ENCODE measurements at regions of chr18 and their contacts with region 1.

Region 1: DNA sequence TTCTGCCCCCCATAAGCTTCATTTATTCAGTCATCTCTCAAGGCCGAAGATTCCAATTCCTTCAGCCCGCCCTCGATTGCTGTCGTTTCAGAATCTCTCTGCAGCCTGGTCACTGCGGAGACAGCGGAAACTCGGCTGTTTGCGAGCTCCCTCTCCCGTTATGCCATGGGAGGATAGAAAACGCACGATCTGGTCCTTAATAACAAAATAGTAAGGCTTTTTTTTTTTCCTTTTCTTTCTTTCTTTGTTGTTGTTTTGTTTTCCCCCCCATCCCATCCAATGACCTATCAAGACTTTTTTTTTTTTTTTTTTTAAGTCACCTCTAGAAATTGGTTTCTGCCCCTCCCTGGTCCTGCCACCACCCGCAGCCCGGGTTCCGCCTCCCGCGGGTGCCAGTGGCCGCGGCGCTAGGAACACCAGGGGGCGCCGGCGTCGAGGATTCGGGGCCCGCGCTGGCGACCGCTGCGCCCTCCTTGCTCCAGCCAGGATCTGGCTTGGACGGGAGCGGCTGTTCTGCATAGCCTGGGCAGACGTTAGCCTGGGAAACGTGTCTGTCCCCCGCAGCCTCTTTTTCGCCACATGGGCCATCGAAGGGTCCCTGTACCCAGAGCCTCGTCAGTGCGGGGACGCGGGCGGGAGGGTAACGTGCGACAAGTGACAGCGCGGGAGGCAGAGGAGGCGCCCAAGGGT is 10.1 kb downstream of the CPLX4 start:
- DNase-seq: peak; percentile 68 to 76
- H3K4me3 ChIP-seq: no peak overlapping the region
- H3K27ac ChIP-seq: no peak overlapping the region
- H3K4me1 ChIP-seq: peaks cover 0 to 7% of the 10 kb centered on the region in 2 donors
- H3K27me3 ChIP-seq: no peaks in the 10 kb centered on the region
- CTCF ChIP-seq: peak; percentile 57 to 80 (median 70)
- POLR2A ChIP-seq: no peak

Region 2: GRCh38 chr18:59172664-59173249 is 135.6 kb before region 1 on chr18:
- intact Hi-C with region 1: no loop called
- DNase-seq: no peak
- H3K4me3 ChIP-seq: no peak overlapping the region
- H3K27ac ChIP-seq: no peak overlapping the region
- H3K4me1 ChIP-seq: no peaks in the 10 kb centered on the region
- H3K27me3 ChIP-seq: no peaks in the 10 kb centered on the region
- CTCF ChIP-seq: no peak
- POLR2A ChIP-seq: no peak

Region 3: DNA sequence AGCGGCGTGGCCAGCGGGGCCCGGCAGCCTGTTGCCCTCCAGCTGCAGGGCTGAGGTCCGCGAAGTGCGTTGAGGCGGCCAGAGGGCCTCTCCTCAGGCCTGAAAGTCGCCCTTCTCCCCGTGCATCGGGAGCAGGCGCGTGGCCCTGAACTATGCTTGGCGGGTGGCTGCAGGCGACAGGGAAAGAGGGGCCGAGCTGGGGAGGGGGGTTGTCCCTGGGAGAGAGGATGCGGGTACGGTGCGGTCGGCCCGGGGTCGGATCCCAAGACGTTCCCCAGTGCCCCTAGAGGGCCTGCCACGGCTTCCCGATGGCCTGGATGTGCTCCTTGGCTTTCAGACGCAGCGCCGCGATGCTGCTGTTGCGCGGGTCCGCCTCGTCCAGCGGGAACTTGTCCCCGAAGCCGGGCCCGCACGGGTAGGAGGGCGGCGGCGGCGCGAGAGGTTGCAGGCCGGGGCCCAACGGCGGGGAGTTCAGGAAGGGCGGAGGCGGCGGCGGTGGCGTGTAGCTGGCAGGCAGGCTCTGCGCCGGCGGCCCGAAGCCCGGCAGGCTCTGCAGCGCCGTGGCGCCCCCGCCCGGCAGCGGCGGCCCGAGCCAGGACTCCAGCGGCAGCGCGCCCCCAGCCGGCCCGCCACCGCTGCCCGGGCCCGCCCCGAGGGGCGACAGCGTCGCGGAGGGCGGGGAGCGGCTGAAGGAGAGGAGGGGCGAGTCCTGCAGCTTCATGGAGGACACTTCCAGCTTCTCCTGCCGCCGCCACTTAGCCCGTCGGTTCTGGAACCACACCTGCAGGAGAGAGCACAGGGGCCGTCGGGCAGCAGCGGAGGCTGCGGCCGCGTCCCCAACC is 39.5 kb before region 1 on chr18:
- intact Hi-C with region 1: no loop called
- DNase-seq: peak; percentile 28 to 30
- H3K4me3 ChIP-seq: no peak overlapping the region
- H3K27ac ChIP-seq: no peak overlapping the region
- H3K4me1 ChIP-seq: peaks cover 23 to 35% of the 10 kb centered on the region in 2 donors
- H3K27me3 ChIP-seq: peaks cover 77% of the 10 kb centered on the region
- CTCF ChIP-seq: peak in 2 of 6 experiments; percentile 10 to 35
- POLR2A ChIP-seq: no peak

Region 4: GRCh38 chr18:59395226-59396110 is 87.1 kb after region 1 on chr18:
- intact Hi-C with region 1: loop called (anchors 5 kb)
- DNase-seq: no peak
- H3K4me3 ChIP-seq: no peak overlapping the region
- H3K27ac ChIP-seq: no peak overlapping the region
- H3K4me1 ChIP-seq: no peaks in the 10 kb centered on the region
- H3K27me3 ChIP-seq: no peaks in the 10 kb centered on the region
- CTCF ChIP-seq: no peak
- POLR2A ChIP-seq: no peak